ENCODE measurements at regions of chr3 and their contacts with region 1.

Region 1: GRCh38 chr3:43690400-43691119 is at the start of gene ABHD5:
- DNase-seq: peak; percentile 55 to 92
- H3K4me3 ChIP-seq: peak within 1 kb of the TSS; percentile 81 to 96
- H3K27ac ChIP-seq: peak within 1 kb of the TSS; percentile 89 to 94
- H3K4me1 ChIP-seq: peaks cover 0 to 11% of the 10 kb centered on the region in 2 donors
- H3K27me3 ChIP-seq: no peaks in the 10 kb centered on the region
- CTCF ChIP-seq: peak in 1 of 3 experiments; percentile 28
- total RNA-seq, gene ABHD5: 5.3 TPM

Region 2: DNA sequence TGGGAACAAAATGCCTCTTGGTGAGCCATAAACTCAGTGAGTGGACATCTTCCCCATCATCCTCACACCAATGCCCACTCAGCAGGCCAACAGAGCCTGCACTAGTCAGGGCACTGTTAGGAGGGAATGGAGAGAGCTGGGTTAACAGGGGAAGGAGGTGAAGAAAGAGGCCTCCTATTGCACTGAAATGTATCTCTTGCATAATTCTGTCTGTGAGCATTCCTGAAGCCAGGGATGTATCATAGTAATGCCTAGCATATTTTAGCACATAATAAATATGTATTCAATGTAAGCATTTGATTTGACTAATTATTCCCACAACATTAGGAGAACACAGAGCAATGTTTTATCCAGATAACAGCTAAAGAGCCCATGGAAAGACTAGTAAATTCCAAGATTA is 149.9 kb before region 1 on chr3:
- intact Hi-C with region 1: loop called (anchors 10 kb)
- DNase-seq: no peak
- H3K4me3 ChIP-seq: no peak overlapping the region
- H3K27ac ChIP-seq: no peak overlapping the region
- H3K4me1 ChIP-seq: no peaks in the 10 kb centered on the region
- H3K27me3 ChIP-seq: no peaks in the 10 kb centered on the region
- CTCF ChIP-seq: no peak

Region 3: DNA sequence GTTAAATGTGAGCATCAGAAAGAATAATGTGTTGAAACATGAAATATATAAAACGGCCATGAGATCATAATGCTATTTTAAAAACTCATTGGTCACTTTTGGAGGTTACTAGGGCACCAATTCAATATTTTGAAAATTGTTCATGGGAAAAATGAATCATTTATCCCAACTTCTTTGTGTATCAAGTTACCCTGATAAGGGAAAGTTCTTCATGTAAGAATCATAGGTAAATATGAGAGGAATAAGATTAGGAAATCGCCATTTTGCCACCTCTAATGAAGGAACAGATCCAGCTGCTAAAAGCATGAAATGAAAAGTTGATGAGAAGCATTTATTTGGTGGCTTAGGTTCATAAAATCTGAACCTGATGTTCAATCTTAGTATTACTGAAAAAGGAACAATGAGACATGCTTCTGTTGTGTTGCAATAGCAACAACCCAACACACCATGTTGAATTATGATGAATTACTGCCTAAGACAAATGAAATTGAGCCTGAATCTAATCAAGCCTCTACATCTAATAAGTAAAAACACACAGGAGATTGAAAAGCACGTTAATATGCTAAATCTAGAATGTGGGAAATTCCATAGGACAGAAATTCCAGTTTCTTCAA is 32.7 kb after region 1 on chr3:
- intact Hi-C with region 1: loop called (anchors 2 kb)
- DNase-seq: no peak
- H3K4me3 ChIP-seq: no peak overlapping the region
- H3K27ac ChIP-seq: peak overlapping the region; percentile 80 to 90
- H3K4me1 ChIP-seq: peaks cover 7 to 9% of the 10 kb centered on the region in 2 donors
- H3K27me3 ChIP-seq: no peaks in the 10 kb centered on the region
- CTCF ChIP-seq: no peak

Region 4: GRCh38 chr3:43733459-43734384 is 43.2 kb after region 1 on chr3:
- intact Hi-C with region 1: loop called (anchors 2 kb)
- DNase-seq: peak; percentile 19 to 91
- H3K4me3 ChIP-seq: no peak overlapping the region
- H3K27ac ChIP-seq: peak overlapping the region; percentile 72 to 82
- H3K4me1 ChIP-seq: peaks cover 6 to 34% of the 10 kb centered on the region in 2 donors
- H3K27me3 ChIP-seq: no peaks in the 10 kb centered on the region
- CTCF ChIP-seq: no peak